A549 (cell line): ENCODE measurements at regions of chr17 and their contacts with region 1.

Region 1: DNA sequence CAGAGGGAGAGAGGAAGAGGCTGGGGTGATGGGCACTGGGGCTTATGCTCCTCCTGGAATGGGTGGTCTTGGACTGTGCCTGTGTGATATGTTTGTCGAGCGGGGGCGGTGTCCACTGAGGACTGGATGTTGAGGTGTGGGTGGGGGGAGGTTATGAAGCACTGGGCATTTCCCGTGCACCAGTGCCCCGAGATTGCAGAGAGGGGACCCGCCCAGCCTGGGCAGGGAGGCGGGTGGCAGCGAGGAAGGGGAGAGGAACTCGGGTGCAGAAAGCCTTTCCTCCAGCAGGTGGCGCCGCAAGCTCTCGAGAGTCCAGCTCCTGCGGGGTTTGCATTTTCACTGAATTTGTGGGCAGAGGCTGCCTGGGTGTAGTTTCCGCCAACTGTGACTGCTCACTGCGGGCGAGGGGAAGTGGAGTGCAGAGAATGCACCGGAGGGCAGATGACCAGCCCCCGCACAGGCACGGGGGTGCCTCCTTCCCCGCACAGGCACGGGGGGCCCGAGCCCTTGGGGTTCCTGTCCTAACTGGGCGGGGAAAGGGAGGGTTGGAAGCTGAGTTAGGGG is 190.6 kb downstream of the SEC14L1 start:
- DNase-seq: peak; percentile 83 to 97
- ATAC-seq: peak; percentile 76 to 87
- H3K4me3 ChIP-seq: no peak overlapping the region
- H3K27ac ChIP-seq: peak overlapping the region; percentile 50 to 83
- H3K4me1 ChIP-seq: peaks cover 56% of the 10 kb centered on the region
- CTCF ChIP-seq: peak; percentile 97
- EP300 ChIP-seq: no peak
- POLR2A ChIP-seq: no peak
- RAD21 ChIP-seq: peak; percentile 98 to 99

Region 2: GRCh38 chr17:77140166-77140878 is 191.1 kb before region 1 on chr17:
- CTCF ChIA-PET with region 1: no interaction called
- POLR2A ChIA-PET with region 1: no interaction called
- DNase-seq: peak; percentile 91 to 99
- ATAC-seq: peak; percentile 91 to 95
- H3K4me3 ChIP-seq: peak overlapping the region; percentile 90
- H3K27ac ChIP-seq: peak overlapping the region; percentile 95 to 96
- H3K4me1 ChIP-seq: peaks cover 13% of the 10 kb centered on the region
- CTCF ChIP-seq: no peak
- EP300 ChIP-seq: no peak
- POLR2A ChIP-seq: peak; percentile 88
- RAD21 ChIP-seq: peak in 1 of 2 experiments; percentile 25; a peak in 2 of 5 replicates

Region 3: GRCh38 chr17:77297693-77298666 is 33.4 kb before region 1 on chr17:
- CTCF ChIA-PET with region 1: interaction called, 16 read pairs
- POLR2A ChIA-PET with region 1: no interaction called
- DNase-seq: peak in 1 of 2 experiments; percentile 11
- ATAC-seq: peak; percentile 24 to 31; a peak in 5 of 6 replicates
- H3K4me3 ChIP-seq: no peak overlapping the region
- H3K27ac ChIP-seq: peak overlapping the region in 1 of 2 experiments; percentile 49; a peak in 2 of 6 replicates
- H3K4me1 ChIP-seq: peaks cover 75% of the 10 kb centered on the region
- CTCF ChIP-seq: no peak
- EP300 ChIP-seq: no peak
- POLR2A ChIP-seq: no peak
- RAD21 ChIP-seq: no peak

Region 4: DNA sequence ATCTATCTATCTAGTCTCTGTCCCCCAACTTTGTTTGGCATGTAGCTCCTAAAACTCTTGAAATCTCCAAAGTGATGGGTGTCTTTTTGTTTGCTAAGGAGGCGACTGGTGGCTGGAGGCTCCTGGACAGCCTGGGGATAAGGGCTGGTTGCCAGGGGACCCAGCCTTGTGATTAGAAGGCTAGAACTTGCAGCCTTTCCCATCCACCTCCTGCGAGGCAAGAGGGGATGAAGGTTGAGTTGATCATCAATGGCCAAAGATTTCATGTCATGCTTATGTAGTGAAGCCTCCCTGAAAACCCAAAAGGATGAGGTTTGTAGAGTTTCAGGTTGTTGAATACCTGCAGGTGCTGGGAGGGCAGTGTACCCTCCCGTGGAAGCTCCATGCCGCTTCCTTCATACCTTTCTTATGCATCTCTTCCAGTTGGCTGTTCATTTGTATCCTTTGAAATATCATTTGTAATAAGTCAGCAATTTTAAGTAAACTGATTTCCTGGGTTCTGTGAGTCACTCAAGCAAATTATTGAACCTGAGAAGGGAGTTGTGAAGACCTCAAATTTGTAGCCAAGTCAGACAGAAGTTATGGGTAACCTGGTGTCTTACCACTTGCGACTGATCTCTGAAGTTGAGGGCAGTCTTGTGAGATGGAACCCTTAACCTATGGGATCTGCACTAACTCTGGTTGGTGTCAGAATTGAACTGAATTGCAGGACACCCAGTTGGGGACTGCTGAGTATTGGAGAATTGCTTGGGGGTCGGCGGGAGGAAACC is 11.8 kb after region 1 on chr17:
- CTCF ChIA-PET with region 1: interaction called, 62 read pairs
- POLR2A ChIA-PET with region 1: no interaction called
- DNase-seq: no peak
- ATAC-seq: no peak
- H3K4me3 ChIP-seq: no peak overlapping the region
- H3K27ac ChIP-seq: no peak overlapping the region
- H3K4me1 ChIP-seq: 0 out of 3 replicates have a peak, but pooled peaks cover 4% of the 10 kb centered on the region
- CTCF ChIP-seq: no peak
- EP300 ChIP-seq: no peak
- POLR2A ChIP-seq: no peak
- RAD21 ChIP-seq: no peak

Region 5: DNA sequence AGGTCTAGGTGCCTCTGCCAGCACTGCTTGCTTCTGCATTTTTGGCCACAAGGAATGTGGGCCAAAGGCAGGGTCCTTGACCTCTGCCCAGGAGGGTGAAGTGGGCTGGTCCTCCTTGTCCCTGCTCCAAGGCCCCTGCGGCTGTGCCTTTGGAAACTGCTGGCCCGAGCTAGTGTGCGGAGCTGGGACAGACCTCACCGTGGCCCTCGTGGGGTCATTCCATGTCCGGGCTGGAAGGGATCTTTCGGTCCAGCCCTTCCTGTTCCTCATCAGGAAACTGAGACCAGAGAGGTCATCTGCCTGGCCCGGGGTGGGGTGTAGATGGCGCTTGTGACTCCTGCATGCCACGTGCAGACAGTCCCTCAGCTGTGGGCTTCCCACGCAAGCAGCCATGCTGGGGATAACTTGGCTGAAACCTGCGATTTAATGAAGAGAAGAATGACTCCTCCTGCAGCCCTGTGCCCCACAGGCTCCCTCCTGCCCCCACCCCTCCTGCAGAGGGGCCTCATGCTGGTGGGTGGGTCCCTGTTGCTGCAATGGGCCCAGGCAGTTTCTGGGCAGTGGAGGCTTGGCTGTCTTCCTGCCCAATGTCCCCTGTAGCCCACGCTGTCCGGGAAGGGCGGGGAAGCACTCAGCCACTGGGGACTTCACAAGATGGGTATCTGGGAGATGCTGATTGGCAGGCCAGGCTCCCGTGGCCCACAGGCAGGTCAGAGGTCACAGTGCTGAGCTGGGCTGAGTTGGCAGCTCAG is 54.5 kb after region 1 on chr17:
- CTCF ChIA-PET with region 1: interaction called, 22 read pairs
- POLR2A ChIA-PET with region 1: no interaction called
- DNase-seq: no peak
- ATAC-seq: peak in 1 of 2 experiments; percentile 16; a peak in 3 of 6 replicates
- H3K4me3 ChIP-seq: no peak overlapping the region
- H3K27ac ChIP-seq: peak overlapping the region; percentile 39 to 74; a peak in 4 of 6 replicates
- H3K4me1 ChIP-seq: peaks cover 88% of the 10 kb centered on the region
- CTCF ChIP-seq: no peak
- EP300 ChIP-seq: no peak
- POLR2A ChIP-seq: no peak
- RAD21 ChIP-seq: no peak

Region 6: DNA sequence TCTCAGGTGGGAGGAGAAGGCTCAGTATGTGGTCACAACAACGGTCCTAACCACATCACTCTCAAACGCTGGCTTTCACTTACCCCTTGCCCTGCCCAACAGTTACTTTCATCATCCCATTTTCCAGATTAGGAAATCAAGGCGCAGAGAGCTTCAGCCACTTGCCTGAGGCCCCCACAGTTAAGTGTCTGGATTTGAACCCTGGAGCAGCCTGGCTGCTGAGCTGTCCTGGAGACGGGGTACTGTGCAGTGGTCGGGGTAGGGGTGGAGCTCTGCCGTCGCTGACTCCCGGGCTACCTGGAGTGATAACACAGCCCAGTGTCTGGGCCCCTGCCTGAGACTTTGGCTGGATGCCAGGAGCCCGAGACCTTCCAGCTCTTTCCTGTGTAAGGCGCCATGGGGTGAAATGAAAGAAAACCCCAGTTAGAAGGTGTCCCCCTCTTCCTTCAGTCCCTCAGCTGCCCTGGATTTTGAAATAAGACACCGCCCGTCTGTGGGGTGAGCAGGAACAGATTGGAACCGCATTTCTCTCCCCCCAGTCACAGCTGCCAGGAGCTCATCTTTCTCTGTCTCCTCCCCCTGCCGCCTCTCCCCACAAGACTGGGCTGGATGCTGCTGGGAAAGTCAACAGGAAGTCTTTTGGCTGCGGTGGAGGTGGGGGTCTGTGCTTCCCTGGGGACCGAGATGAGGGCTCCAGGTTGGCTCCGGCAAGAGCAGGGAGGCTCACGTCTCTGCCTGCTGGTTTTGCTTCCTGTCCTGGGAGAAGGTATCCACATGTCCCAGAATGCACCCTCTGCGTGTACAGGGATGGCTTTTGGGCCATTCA is 89.6 kb after region 1 on chr17:
- CTCF ChIA-PET with region 1: interaction called, 198 read pairs
- POLR2A ChIA-PET with region 1: no interaction called
- DNase-seq: peak; percentile 54 to 70
- ATAC-seq: peak in 1 of 2 experiments; percentile 9; a peak in 3 of 6 replicates
- H3K4me3 ChIP-seq: no peak overlapping the region
- H3K27ac ChIP-seq: peak overlapping the region; percentile 75 to 95
- H3K4me1 ChIP-seq: peaks cover 81% of the 10 kb centered on the region
- CTCF ChIP-seq: no peak
- EP300 ChIP-seq: no peak
- POLR2A ChIP-seq: no peak
- RAD21 ChIP-seq: no peak

Region 7: GRCh38 chr17:77460514-77461046 is 129.2 kb after region 1 on chr17:
- CTCF ChIA-PET with region 1: interaction called, 11 read pairs
- POLR2A ChIA-PET with region 1: no interaction called
- DNase-seq: no peak
- ATAC-seq: no peak
- H3K4me3 ChIP-seq: no peak overlapping the region
- H3K27ac ChIP-seq: peak overlapping the region in 1 of 2 experiments; percentile 19; a peak in 1 of 6 replicates
- H3K4me1 ChIP-seq: peaks cover 8% of the 10 kb centered on the region; the same call in 2 of the 3 replicates
- CTCF ChIP-seq: no peak
- EP300 ChIP-seq: no peak
- POLR2A ChIP-seq: no peak
- RAD21 ChIP-seq: no peak

Region 8: GRCh38 chr17:77501101-77501566 is 169.8 kb after region 1 on chr17:
- CTCF ChIA-PET with region 1: interaction called, 229 read pairs
- POLR2A ChIA-PET with region 1: no interaction called
- DNase-seq: peak; percentile 55 to 57
- ATAC-seq: 0 out of 6 replicates have a peak, but pooled peaks of 1 of the 2 experiments have one; percentile 17
- H3K4me3 ChIP-seq: no peak overlapping the region
- H3K27ac ChIP-seq: no peak overlapping the region
- H3K4me1 ChIP-seq: no peaks in the 10 kb centered on the region
- CTCF ChIP-seq: peak; percentile 61
- EP300 ChIP-seq: no peak
- POLR2A ChIP-seq: no peak
- RAD21 ChIP-seq: peak; percentile 23 to 48; a peak in 2 of 5 replicates